Ascending aorta (tissue), 2 donors: ENCODE measurements at regions of chr2 and their contacts with region 1.

Region 1: GRCh38 chr2:31333527-31334183 is 80.9 kb downstream of the XDH start:
- DNase-seq: peak; percentile 40 to 93
- H3K4me3 ChIP-seq: no peak overlapping the region
- H3K27ac ChIP-seq: no peak overlapping the region
- H3K4me1 ChIP-seq: peaks cover 0 to 3% of the 10 kb centered on the region in 2 donors
- H3K27me3 ChIP-seq: no peaks in the 10 kb centered on the region
- CTCF ChIP-seq: peak; percentile 93 to 97 (median 97)

Region 2: GRCh38 chr2:30979822-30980245 is 353.8 kb before region 1 on chr2:
- intact Hi-C with region 1: loop called (anchors 10 kb)
- DNase-seq: peak; percentile 88 to 93
- H3K4me3 ChIP-seq: no peak overlapping the region
- H3K27ac ChIP-seq: peak overlapping the region; percentile 70 to 83
- H3K4me1 ChIP-seq: peaks cover 4 to 11% of the 10 kb centered on the region in 2 donors
- H3K27me3 ChIP-seq: no peaks in the 10 kb centered on the region
- CTCF ChIP-seq: peak in 2 of 3 experiments; percentile 44 to 57

Region 3: DNA sequence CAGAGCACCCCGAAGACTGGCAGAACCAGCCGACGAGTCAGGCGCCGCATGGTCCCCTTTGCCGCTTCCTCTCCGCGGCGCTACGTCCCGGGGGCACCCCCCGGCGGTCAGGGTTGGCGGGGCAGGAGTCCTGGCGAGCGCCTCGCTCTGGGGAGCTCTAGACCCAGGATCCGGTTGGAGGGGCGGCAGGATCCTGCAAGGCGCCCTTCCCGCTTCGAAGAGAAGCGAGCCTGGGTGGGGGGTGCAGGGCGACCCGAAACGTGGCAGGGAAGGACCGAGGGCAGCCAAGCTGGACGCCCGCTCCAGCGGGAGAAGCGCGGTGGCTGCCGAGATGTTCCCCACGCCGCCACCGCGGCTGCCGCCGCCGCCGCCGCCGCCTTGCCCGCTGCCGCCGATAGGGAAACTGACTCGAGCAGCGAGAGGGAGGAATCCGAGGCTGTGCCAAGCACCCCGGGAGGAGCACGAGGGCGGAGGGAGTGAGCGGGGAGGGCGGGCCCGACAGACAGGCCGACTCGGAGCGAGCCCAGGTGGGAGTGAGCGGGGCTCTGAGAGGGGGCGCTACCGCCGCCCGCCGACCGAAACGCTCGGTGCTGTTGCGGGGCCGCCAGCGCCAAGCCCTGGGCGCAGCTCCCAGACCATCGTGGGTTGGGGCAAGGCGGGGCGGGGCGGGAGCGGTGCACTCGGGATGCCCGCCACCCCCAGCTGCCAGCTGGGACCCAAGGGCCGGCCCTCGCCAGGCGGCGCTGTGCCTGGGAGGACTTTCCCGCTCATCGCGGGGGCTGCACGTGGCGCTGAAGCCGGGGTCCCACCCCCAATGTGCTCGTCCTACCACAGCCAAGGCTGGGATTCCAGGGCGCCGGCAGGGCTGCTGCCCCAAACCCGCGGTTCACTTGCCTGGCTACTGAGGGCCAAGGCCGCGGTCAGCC is 195.4 kb before region 1 on chr2 and contains the start of gene GALNT14:
- intact Hi-C with region 1: loop called (anchors 1 kb)
- DNase-seq: peak in 1 of 2 donors; percentile 73
- H3K4me3 ChIP-seq: peak within 1 kb of the TSS; percentile 62 to 74
- H3K27ac ChIP-seq: peak within 1 kb of the TSS; percentile 10 to 28
- H3K4me1 ChIP-seq: peaks cover 8 to 10% of the 10 kb centered on the region in 2 donors
- H3K27me3 ChIP-seq: no peaks in the 10 kb centered on the region
- CTCF ChIP-seq: peak; percentile 40 to 62 (median 45)
- total RNA-seq, gene GALNT14: not detected

Region 4: GRCh38 chr2:31170071-31170698 is 163.5 kb before region 1 on chr2:
- intact Hi-C with region 1: loop called (anchors 2 kb)
- DNase-seq: peak in 1 of 2 donors; percentile 70
- H3K4me3 ChIP-seq: no peak overlapping the region
- H3K27ac ChIP-seq: no peak overlapping the region
- H3K4me1 ChIP-seq: no peaks in the 10 kb centered on the region
- H3K27me3 ChIP-seq: no peaks in the 10 kb centered on the region
- CTCF ChIP-seq: peak; percentile 77 to 92 (median 91)

Region 5: GRCh38 chr2:31233741-31234682 is 99.6 kb before region 1 on chr2 and contains the start of gene EHD3:
- intact Hi-C with region 1: loop called (anchors 1 kb)
- DNase-seq: peak; percentile 71 to 95
- H3K4me3 ChIP-seq: peak within 1 kb of the TSS; percentile 55 to 77
- H3K27ac ChIP-seq: peak within 1 kb of the TSS; percentile 82 to 99
- H3K4me1 ChIP-seq: peaks cover 19 to 37% of the 10 kb centered on the region in 2 donors
- H3K27me3 ChIP-seq: no peaks in the 10 kb centered on the region
- CTCF ChIP-seq: peak; percentile 61 to 78 (median 71)
- total RNA-seq, gene EHD3: 22.5 TPM

Region 6: DNA sequence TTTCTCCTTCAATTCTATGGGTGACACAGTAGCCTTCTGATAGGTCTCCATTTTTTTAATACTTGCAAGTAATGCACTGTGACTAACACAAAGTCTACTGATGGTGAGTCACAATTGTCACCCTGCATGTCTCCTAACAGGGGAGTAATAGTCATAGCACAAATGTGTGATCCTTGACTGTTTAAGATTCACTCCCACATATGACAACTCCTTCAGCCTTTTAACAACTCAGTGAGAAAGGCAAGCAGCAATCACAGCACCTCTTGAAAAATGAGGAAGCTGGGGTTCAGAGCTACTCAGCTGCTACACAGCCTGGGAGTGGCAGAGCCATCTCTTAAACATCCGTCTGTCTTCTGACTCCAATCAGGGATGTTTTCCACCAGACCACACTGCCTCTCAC is 35.9 kb before region 1 on chr2:
- intact Hi-C with region 1: loop called (anchors 1 kb)
- DNase-seq: no peak
- H3K4me3 ChIP-seq: no peak overlapping the region
- H3K27ac ChIP-seq: peak overlapping the region; percentile 84 to 86
- H3K4me1 ChIP-seq: peaks cover 10 to 40% of the 10 kb centered on the region in 2 donors
- H3K27me3 ChIP-seq: no peaks in the 10 kb centered on the region
- CTCF ChIP-seq: no peak